A673 (cell line): ENCODE measurements at regions of chr19 and their contacts with region 1.

Region 1: DNA sequence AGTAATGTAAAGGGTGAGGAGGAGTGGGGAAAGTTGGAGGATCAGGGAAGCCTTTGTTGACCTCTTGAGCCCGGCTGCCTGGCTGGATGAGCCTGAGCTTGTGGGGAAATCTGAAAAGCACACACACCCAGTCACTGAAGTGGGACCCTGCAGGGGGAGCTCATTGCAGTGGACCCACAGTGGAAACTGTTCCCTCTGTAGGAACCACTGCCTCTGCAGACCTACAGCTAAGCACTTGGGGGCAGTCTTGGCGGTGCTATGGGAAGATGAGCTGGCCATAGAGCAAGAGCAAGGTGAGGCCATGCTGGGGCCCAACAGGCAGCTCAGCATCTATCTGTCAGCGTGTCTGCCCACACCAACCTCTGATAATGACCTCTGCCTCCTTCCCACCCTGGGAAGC is 294.8 kb downstream of the TSHZ3 start:
- DNase-seq: peak; percentile 79
- H3K4me3 ChIP-seq: no peak overlapping the region
- H3K27ac ChIP-seq: no peak overlapping the region
- H3K4me1 ChIP-seq: no peaks in the 10 kb centered on the region
- H3K27me3 ChIP-seq: no peaks in the 10 kb centered on the region
- CTCF ChIP-seq: peak; percentile 79

Region 2: DNA sequence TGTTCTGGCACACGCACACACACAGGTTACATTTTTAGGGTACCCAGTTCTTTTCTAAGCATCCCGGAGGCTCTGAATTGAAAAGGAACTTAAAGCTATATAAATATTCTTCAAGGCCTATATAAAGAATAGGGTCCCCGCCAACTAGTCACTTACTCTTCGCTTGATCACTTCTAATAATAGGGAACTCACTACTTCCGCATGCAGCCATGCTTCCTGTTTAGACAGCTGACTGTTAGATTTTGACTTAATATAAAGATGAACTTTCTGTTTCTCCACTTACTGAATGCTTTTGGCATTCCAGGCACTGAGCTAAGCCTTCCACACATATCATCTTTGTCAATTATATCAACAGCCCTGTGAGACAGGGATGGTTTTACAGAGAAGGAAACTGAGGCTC is 35.3 kb after region 1 on chr19:
- CTCF ChIA-PET with region 1: no interaction called
- POLR2A ChIA-PET with region 1: no interaction called
- intact Hi-C with region 1: no loop called
- DNase-seq: no peak
- H3K4me3 ChIP-seq: no peak overlapping the region
- H3K27ac ChIP-seq: no peak overlapping the region
- H3K4me1 ChIP-seq: no peaks in the 10 kb centered on the region
- H3K27me3 ChIP-seq: no peaks in the 10 kb centered on the region
- CTCF ChIP-seq: no peak

Region 3: DNA sequence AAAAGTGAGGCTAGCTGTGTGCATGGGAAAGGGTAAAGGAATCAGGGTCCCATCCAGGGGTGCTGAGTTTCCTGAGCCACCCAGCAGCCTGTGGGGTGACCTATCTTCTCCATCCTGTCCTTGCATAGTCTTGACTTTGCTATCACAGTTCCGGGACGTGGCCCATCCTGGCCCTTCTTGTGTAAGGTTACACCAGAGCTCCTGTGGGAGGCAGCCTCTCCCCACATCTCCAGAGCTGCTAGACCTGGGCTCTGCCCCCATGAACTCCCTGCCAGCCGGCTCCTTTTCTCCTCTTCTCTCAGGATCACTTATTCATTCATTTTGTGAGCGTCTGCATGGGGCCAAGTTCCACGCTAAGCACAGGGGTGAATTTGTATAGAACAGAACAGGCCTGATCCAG is 55.9 kb after region 1 on chr19:
- CTCF ChIA-PET with region 1: no interaction called
- POLR2A ChIA-PET with region 1: no interaction called
- intact Hi-C with region 1: no loop called
- DNase-seq: no peak
- H3K4me3 ChIP-seq: no peak overlapping the region
- H3K27ac ChIP-seq: no peak overlapping the region
- H3K4me1 ChIP-seq: no peaks in the 10 kb centered on the region
- H3K27me3 ChIP-seq: no peaks in the 10 kb centered on the region
- CTCF ChIP-seq: peak; percentile 33; the same call in 1 of the 2 replicates

Region 4: DNA sequence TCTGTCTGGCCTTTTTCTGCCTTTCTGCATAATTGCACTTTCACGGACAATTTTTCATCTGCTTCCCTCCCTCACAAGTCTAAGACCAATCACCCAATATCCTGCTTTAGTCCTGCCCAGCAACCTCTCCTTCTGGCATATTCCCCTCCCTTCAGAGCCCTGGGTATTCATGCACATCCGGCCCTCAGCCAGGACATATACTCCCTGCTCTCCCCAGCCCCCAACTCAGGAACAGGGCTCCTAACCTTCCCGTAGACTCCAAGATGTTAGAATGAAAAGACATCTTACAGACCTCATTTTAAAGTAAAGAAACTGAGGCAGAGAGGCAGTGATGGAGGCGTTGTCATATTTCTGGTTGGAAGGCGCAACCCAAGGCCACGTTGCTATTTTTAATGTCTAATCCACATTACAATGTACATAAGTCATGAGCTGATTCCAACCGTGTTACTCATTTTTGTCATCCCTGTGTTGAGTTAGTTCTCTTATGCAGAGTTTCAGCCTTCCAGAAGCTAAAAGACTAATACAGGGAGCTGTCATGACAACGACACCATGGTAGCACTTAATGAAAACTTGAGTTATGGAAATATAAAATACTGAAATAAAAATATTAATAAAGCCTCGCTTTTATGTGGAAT is 85.6 kb after region 1 on chr19:
- CTCF ChIA-PET with region 1: interaction called, 21 read pairs
- POLR2A ChIA-PET with region 1: no interaction called
- intact Hi-C with region 1: no loop called
- DNase-seq: peak; percentile 9
- H3K4me3 ChIP-seq: no peak overlapping the region
- H3K27ac ChIP-seq: no peak overlapping the region
- H3K4me1 ChIP-seq: peaks cover 15% of the 10 kb centered on the region
- H3K27me3 ChIP-seq: no peaks in the 10 kb centered on the region
- CTCF ChIP-seq: no peak

Region 5: GRCh38 chr19:31548941-31549340 is 494.5 kb after region 1 on chr19:
- CTCF ChIA-PET with region 1: no interaction called
- POLR2A ChIA-PET with region 1: no interaction called
- intact Hi-C with region 1: loop called (anchors 10 kb)
- DNase-seq: peak; percentile 42
- H3K4me3 ChIP-seq: no peak overlapping the region
- H3K27ac ChIP-seq: no peak overlapping the region
- H3K4me1 ChIP-seq: peaks cover 5% of the 10 kb centered on the region
- H3K27me3 ChIP-seq: no peaks in the 10 kb centered on the region
- CTCF ChIP-seq: peak; percentile 65

Region 6: DNA sequence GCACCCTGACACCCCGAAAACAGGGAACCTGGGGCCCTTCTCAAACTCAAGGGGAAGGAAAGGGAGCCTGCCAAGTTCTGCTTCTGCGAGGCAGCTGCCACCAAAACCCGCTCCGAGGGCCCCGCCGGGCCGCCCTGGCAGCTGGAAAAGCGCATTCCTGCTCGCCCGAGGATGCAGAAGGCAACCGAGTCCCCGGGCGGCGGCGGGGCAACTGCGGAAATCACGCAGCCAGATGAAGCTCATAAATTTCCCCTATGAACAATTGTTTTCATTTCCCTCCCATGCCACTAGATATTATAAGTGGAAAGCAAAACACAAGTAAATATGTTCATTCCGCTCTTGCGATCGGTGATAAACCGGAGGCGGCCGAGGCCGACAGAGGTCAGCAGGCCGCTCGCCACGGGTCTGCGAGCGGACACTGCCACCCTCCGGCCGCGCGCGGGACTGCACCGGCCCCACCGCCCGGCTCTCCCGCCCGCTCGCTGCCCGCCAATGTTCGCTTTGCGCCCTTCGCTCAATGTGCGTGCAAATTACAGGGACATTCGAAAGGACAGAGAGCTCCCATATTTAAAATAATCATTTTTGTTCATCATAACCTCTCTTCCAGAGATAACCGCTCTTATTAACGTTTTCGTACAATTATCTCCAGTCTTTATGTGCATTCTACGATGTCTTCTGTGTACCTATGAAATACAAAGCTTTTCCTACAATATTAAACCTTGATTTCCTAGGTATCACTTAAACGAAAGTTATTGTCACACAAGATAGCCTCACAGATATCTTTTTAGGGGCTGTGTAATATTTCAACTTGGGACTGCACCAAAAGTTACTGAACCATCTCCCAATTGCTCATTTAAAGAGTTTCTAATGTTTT is 1170.2 kb after region 1 on chr19:
- CTCF ChIA-PET with region 1: interaction called, 5 read pairs
- POLR2A ChIA-PET with region 1: no interaction called
- intact Hi-C with region 1: loop called (anchors 10 kb)
- DNase-seq: peak; percentile 51
- H3K4me3 ChIP-seq: peak overlapping the region; percentile 26
- H3K27ac ChIP-seq: no peak overlapping the region
- H3K4me1 ChIP-seq: peaks cover 10% of the 10 kb centered on the region
- H3K27me3 ChIP-seq: no peaks in the 10 kb centered on the region
- CTCF ChIP-seq: peak; percentile 89